ENCODE measurements at regions of chr14 and their contacts with region 1.

Region 1: DNA sequence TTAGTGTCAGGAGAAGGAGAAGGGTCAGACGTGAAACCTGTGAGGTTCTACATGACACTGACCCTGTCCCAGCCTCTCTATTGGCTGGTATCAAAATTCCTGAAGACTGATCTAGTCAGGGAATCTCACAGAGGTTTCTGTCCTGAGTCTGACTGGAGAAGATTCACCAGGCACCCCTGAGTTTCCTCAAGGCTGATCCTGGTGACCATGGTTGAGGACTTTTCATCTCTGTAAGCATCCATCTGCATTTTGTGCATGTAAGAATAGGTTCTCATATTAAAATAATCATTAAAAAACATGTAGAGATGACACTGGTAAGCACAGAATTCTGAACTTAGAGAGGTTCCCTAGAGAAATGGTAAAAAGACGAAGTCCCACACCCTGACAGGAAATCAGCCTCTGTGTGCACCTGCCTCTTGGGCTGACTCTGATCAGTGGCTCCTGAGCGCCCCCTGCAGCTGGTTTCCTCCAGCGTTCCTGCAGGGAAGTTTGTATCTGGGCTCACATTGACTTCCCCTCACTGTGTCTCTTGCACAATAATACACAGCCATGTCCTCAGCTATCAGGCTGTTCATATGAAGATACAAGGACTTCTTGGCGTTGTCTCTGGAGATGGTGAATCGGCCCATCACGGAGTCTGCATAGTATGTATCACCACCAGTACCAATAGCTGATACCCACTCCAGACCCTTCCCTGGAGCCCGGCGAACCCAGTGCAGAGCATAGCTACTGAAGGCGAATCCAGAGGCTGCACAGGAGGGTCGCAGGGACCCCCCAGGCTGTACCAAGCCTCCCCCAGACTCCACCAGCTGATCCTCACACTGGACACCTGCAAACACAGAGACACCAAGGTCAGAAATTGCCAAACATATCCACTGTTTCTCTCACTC is 991.9 kb downstream of the TMEM121 start:
- DNase-seq: peak; percentile 65 to 90 (median 84)
- ATAC-seq: peak; percentile 79
- H3K4me3 ChIP-seq: no peak overlapping the region
- H3K4me3 Mint-ChIP-seq: peak overlapping the region in 6 of 10 donors; percentile 25 to 65 (median 36)
- H3K27ac ChIP-seq: no peak overlapping the region
- H3K27ac Mint-ChIP-seq: peak overlapping the region in 3 of 9 donors; percentile 9 to 65 (median 31)
- H3K4me1 ChIP-seq: peaks cover 9 to 12% of the 10 kb centered on the region in 2 donors
- H3K4me1 Mint-ChIP-seq: peaks cover 12 to 42% (median 26%) of the 10 kb centered on the region in 7 donors
- H3K27me3 ChIP-seq: no peaks in the 10 kb centered on the region
- H3K27me3 Mint-ChIP-seq: peaks cover 0 to 60% (median 8%) of the 10 kb centered on the region in 5 donors

Region 2: GRCh38 chr14:106277503-106277902 is 240.8 kb before region 1 on chr14:
- CTCF ChIA-PET with region 1: no interaction called
- POLR2A ChIA-PET with region 1: no interaction called
- intact Hi-C with region 1: loop called in 1 of 2 experiments (anchors 10 kb)
- DNase-seq: peak in 5 of 9 donors; percentile 11 to 44 (median 38)
- ATAC-seq: peak; percentile 67
- H3K4me3 ChIP-seq: no peak overlapping the region
- H3K4me3 Mint-ChIP-seq: peak overlapping the region in 2 of 10 donors; percentile 40 to 45
- H3K27ac ChIP-seq: no peak overlapping the region
- H3K27ac Mint-ChIP-seq: peak overlapping the region in 5 of 9 donors; percentile 60 to 87 (median 78)
- H3K4me1 ChIP-seq: peaks cover 7 to 22% of the 10 kb centered on the region in 2 donors
- H3K4me1 Mint-ChIP-seq: peaks cover 12 to 30% (median 22%) of the 10 kb centered on the region in 7 donors
- H3K27me3 ChIP-seq: peaks cover 0 to 5% of the 10 kb centered on the region in 2 donors
- H3K27me3 Mint-ChIP-seq: peaks cover 5 to 54% (median 25%) of the 10 kb centered on the region in 5 donors

Region 3: GRCh38 chr14:106442857-106443256 is 75.4 kb before region 1 on chr14:
- CTCF ChIA-PET with region 1: interaction called, 3 read pairs
- POLR2A ChIA-PET with region 1: no interaction called
- intact Hi-C with region 1: loop called in 1 of 2 experiments (anchors 2 kb)
- DNase-seq: peak in 8 of 9 donors; percentile 16 to 59 (median 40)
- ATAC-seq: peak; percentile 84
- H3K4me3 ChIP-seq: no peak overlapping the region
- H3K4me3 Mint-ChIP-seq: peak overlapping the region in 3 of 10 donors; percentile 7 to 33 (median 8)
- H3K27ac ChIP-seq: no peak overlapping the region
- H3K27ac Mint-ChIP-seq: no peak overlapping the region
- H3K4me1 ChIP-seq: no peaks in the 10 kb centered on the region
- H3K4me1 Mint-ChIP-seq: peaks cover 0 to 7% (median 0%) of the 10 kb centered on the region in 7 donors
- H3K27me3 ChIP-seq: no peaks in the 10 kb centered on the region
- H3K27me3 Mint-ChIP-seq: peaks cover 6 to 53% (median 22%) of the 10 kb centered on the region in 5 donors

Region 4: DNA sequence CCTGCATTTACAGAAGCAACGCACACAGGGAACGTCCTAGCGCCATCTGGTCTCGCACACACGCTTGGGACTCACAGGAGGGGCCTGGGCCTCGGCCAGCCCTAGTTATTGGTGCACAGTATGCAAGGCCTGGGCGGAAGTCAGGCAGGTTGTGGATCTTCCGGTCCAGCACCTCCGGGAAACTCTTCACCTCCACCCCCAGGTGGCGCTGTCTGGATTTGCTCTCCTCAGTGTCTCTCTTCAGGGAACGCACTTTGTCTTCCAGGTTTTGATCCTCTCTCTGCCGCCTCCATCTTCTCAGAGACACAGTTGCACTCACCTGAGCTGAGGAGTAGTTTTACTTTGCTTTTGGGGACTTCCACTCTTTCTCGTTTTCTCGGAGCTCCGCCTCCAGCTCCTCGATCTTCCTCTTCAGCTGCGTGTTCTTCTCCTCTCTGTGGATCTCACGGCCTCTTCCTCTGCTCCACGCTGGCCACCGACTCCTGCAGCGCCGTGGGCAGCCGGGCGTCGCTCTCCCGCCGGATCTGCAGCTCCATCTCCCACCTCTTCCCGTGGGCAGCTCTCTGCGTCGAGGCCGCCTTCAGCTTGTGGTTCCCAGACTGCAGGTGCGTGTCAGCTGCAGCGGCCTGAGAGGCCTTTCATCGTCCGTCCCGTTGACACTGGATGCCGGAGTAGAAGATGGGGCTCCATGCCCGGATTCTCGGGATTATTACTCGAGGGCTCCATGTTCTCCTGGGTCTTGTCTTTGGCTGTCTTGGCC is 58.1 kb before region 1 on chr14:
- CTCF ChIA-PET with region 1: interaction called, 10 read pairs
- POLR2A ChIA-PET with region 1: interaction called, 3 read pairs
- intact Hi-C with region 1: loop called (anchors 1 kb)
- DNase-seq: peak; percentile 41 to 67 (median 56)
- ATAC-seq: peak; percentile 79
- H3K4me3 ChIP-seq: no peak overlapping the region
- H3K4me3 Mint-ChIP-seq: peak overlapping the region in 1 of 10 donors; percentile 42
- H3K27ac ChIP-seq: no peak overlapping the region
- H3K27ac Mint-ChIP-seq: peak overlapping the region in 1 of 9 donors; percentile 74
- H3K4me1 ChIP-seq: peaks cover 0 to 4% of the 10 kb centered on the region in 2 donors
- H3K4me1 Mint-ChIP-seq: peaks cover 0 to 9% (median 0%) of the 10 kb centered on the region in 7 donors
- H3K27me3 ChIP-seq: no peaks in the 10 kb centered on the region
- H3K27me3 Mint-ChIP-seq: peaks cover 0 to 22% (median 3%) of the 10 kb centered on the region in 5 donors

Measured in naive thymus-derived CD4-positive, alpha-beta T cell (primary cell).